ENCODE measurements at regions of chr12 and their contacts with region 1.

Region 1: DNA sequence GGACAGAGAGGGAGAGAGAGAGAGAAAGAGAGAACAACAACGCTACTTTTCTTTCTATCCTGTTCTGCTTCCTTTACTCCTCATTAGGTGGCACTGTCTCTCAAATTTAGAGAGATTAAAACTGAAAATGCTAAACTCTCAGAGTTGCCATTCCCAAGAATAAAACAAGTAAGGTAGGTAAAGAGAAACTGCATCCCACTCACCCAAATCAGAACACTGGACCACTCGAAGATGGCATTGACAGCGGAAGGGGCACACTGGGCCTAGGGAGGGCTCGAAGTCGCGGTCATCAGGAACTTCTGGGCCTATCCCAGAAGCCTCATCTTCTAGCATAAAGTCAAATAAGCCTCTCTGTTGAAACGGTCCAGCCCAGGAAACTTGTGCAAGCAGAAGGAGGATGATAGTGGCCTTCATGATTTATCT is 4.5 kb downstream of the DCN start:
- DNase-seq: peak; percentile 6
- H3K4me3 ChIP-seq: peak overlapping the region in 1 of 3 experiments; percentile 23
- H3K27ac ChIP-seq: no peak overlapping the region
- H3K4me1 ChIP-seq: no peaks in the 10 kb centered on the region
- H3K27me3 ChIP-seq: peaks cover 2% of the 10 kb centered on the region
- CTCF ChIP-seq: peak; percentile 35 to 64

Region 2: GRCh38 chr12:90333939-90334338 is 844.2 kb before region 1 on chr12:
- CTCF ChIA-PET with region 1: no interaction called
- dilution Hi-C with region 1: no loop called
- in situ Hi-C with region 1: no loop called
- intact Hi-C with region 1: no loop called
- DNase-seq: peak; percentile 51
- H3K4me3 ChIP-seq: no peak overlapping the region
- H3K27ac ChIP-seq: no peak overlapping the region
- H3K4me1 ChIP-seq: no peaks in the 10 kb centered on the region
- H3K27me3 ChIP-seq: no peaks in the 10 kb centered on the region
- CTCF ChIP-seq: no peak

Region 3: DNA sequence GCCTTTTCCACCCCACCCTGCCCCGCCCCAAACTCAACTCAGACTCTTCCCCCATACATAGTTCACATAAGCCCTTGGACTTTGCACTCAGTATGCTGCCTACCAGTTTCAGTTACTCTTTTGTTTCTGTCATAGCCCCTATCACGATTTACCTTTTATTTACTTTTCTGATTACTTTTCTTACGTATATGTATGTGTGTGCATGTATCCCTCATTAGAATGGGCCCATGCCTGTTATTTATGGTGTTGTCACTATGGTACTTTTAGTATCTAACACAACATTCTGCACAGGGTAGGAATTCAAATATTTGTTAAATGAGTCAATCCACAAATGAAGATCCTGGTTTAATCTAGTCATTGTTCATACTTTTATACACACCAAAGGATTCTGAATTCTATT is 50.4 kb before region 1 on chr12:
- CTCF ChIA-PET with region 1: no interaction called
- dilution Hi-C with region 1: no loop called
- in situ Hi-C with region 1: no loop called
- intact Hi-C with region 1: no loop called
- DNase-seq: peak; percentile 14
- H3K4me3 ChIP-seq: no peak overlapping the region
- H3K27ac ChIP-seq: no peak overlapping the region
- H3K4me1 ChIP-seq: peaks cover 5% of the 10 kb centered on the region
- H3K27me3 ChIP-seq: no peaks in the 10 kb centered on the region
- CTCF ChIP-seq: no peak

Region 4: DNA sequence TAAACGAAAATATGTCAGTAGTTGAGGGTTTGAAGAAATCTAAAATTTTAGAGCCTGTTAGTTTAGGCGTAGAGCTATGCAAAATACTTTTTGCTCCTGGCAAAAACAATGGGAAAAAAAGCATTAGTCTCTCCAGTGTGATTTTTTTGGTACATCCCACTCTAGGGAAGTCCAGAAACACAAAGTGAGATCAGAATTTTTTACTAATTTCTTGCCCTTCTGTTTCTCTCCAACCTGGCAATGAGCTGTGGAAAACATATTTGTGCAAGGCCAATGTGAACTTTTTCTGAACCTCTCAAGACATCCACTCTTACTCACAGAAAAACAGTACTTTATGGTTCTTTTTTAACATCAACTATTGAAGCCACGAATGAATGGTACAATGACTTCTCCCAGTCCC is 61.3 kb after region 1 on chr12:
- CTCF ChIA-PET with region 1: no interaction called
- dilution Hi-C with region 1: no loop called
- in situ Hi-C with region 1: no loop called
- intact Hi-C with region 1: loop called (anchors 1 kb)
- DNase-seq: no peak
- H3K4me3 ChIP-seq: no peak overlapping the region
- H3K27ac ChIP-seq: no peak overlapping the region
- H3K4me1 ChIP-seq: no peaks in the 10 kb centered on the region
- H3K27me3 ChIP-seq: peaks cover 3% of the 10 kb centered on the region
- CTCF ChIP-seq: no peak

Region 5: DNA sequence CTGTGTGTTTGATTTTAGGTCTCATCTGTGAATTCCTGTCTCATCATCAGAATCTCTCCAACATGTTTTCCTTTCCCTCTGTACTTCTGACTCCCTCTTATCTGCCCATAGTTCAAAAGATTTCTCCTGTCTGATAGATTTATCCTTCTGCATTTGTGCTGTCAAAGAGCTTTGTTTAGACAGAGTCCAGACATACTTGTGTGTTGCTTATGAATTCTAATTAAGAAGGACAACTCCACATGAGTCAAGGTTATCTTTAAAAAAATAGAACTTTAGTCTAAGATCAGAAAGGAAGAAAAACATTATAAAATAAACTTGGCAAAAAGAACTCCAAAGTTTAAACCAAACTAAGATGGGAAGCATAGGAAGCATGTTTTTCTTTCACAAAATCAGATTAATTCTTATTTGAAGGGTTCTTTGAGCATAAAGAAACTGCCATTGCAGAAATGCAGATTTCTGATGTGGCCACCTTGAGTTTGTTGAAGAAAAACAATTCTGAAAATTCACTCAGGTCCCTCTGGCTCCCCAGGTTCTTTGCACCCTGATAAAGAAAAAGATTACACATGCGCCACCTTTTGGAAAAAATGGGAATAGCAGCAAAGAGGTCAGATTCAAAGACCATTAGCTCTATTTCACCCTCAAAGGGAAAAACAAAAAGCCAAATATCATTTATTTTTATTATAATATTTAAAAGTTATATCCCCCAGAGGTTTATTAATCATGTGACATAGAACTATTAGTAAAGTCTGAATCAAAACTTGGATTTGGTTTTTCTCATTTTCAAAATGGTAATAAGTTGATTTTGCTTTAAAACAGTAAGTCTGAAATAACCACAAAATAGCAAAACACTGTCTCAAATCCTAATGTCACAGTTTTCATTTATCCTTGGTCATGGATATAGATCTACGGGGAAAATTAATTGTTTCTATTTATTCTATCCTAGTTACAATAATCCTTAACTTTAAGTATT is 148.2 kb after region 1 on chr12:
- CTCF ChIA-PET with region 1: no interaction called
- dilution Hi-C with region 1: no loop called
- in situ Hi-C with region 1: loop called in 1 of 2 experiments (anchors 10 kb)
- intact Hi-C with region 1: loop called (anchors 1 kb)
- DNase-seq: peak; percentile 26
- H3K4me3 ChIP-seq: no peak overlapping the region
- H3K27ac ChIP-seq: no peak overlapping the region
- H3K4me1 ChIP-seq: no peaks in the 10 kb centered on the region
- H3K27me3 ChIP-seq: peaks cover 1% of the 10 kb centered on the region
- CTCF ChIP-seq: peak; percentile 78 to 79

Region 6: DNA sequence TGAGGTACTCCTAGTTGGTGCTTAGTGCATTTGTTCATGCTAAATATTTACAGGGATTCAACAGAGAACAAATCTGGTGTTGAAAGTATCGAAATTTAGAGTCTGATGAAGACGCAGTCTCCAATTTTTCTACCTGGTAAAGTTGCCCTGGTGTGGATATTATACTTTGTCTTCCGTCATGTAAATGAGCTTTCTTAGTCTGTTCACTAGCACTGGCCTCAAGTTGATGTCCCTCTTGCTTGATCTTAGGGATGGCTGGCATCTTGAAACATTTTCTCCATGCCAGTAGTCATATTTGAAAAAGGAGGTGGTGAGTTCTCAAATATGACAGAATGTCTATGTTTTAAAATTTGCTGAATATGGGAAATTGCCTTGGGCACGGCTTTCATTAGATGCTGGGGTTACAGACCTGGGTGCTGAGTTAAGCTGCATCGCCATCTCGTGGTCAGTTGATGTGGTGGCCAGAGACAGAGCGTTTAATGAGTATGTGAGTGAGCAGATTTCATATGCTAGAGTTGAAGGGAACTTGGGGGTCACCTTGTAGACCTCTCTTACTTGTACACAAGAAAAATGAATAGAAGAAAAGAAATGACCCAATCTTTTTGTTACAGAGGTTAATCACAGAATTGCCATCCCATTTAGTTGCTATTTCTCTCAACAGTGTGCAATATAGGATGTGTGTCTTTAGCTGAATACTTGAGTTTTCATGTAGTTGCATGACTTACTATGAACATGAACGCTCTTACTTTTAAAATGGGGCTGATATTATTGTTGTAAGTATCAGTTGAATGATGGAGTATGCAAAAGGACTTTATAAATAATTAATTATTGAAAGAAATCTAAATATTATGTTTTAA is 177.2 kb after region 1 on chr12:
- CTCF ChIA-PET with region 1: no interaction called
- dilution Hi-C with region 1: no loop called
- in situ Hi-C with region 1: no loop called
- intact Hi-C with region 1: loop called (anchors 1 kb)
- DNase-seq: peak; percentile 49
- H3K4me3 ChIP-seq: no peak overlapping the region
- H3K27ac ChIP-seq: no peak overlapping the region
- H3K4me1 ChIP-seq: no peaks in the 10 kb centered on the region
- H3K27me3 ChIP-seq: peaks cover 11% of the 10 kb centered on the region
- CTCF ChIP-seq: peak; percentile 82 to 94